WTC11 (cell line): ENCODE measurements at regions of chr3 and their contacts with region 1.

Region 1: GRCh38 chr3:56347219-56347871 is 120.9 kb downstream of the ERC2 start:
- DNase-seq: peak; percentile 92
- ATAC-seq: peak; percentile 96
- H3K4me3 Mint-ChIP-seq: no peak overlapping the region
- H3K27ac Mint-ChIP-seq: no peak overlapping the region
- H3K4me1 Mint-ChIP-seq: peaks cover 15% of the 10 kb centered on the region
- H3K27me3 Mint-ChIP-seq: no peaks in the 10 kb centered on the region
- CTCF ChIP-seq: peak; percentile 90

Region 2: DNA sequence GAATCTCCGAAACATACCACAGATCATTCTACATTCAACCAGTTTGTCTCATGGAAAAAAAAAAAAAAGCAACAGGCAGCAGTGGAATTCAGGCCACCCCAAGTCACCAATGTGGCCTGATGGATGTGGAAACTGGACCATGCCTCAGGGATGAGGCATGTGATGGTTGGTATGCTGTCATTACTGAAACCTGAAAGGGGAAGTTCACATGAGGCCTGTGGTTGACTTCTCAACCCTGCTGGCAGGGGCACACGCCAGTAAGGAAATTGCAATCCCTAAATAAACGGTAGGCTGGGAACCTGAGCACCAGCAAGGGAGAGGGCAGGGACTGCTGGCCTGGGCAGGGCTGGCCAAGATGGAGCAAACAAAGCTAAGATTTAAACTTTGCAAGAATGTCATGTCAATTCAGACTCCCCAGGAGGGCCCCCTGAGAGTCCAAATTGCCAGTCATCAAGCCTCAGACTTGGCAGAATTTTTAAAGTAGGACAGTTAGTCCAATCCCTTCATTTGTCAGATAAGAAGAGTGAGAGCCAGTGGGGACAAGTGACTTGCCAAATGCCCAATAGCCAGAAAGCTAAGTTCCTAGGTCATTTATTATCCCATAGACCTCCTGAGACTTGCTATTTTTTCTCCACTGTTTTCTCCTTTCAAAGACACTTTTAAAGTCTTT is 189.5 kb before region 1 on chr3:
- CTCF ChIA-PET with region 1: no interaction called
- POLR2A ChIA-PET with region 1: no interaction called
- DNase-seq: no peak
- ATAC-seq: 0 out of 2 replicates have a peak, but pooled peaks have one; percentile 30
- H3K4me3 Mint-ChIP-seq: no peak overlapping the region
- H3K27ac Mint-ChIP-seq: no peak overlapping the region; the same call in 1 of the 2 replicates
- H3K4me1 Mint-ChIP-seq: peaks cover 11% of the 10 kb centered on the region
- H3K27me3 Mint-ChIP-seq: no peaks in the 10 kb centered on the region
- CTCF ChIP-seq: no peak

Region 3: DNA sequence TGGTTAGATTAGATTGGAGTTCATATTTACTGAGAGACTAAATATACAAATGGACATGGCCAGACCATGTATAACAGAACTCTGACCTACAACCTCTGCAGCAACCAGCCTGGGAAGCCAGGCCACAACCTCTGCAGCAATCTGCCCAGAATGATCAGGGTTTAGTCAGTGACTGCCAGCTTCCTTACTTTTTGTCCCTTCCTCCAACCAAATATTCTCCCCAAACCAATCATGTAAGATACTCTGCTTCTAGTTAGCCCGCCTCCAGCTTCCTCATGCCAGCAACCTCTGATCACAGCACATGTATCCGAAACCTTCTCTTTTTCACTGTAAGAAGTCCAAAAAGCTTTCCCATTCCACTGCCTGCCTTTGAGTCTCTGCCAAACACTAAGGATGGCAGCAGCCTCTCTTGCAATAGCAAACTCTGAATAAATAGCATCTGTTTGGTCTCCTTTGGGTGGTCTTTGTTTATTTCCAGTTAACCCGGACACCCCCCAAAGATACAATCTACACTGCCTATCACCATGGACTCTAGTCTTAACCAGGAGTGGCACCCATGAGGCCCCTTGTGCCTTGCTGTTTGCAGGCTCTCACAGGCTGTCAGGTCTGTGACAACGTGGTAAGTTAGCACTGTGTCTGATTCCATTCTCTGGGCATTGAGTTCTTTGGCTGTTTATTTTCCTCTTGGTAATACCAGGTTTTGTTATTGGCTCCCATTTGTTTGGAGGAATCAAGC is 18.7 kb after region 1 on chr3:
- CTCF ChIA-PET with region 1: interaction called, 25 read pairs
- POLR2A ChIA-PET with region 1: no interaction called
- DNase-seq: no peak
- ATAC-seq: no peak
- H3K4me3 Mint-ChIP-seq: no peak overlapping the region
- H3K27ac Mint-ChIP-seq: peak overlapping the region; percentile 29
- H3K4me1 Mint-ChIP-seq: peaks cover 20% of the 10 kb centered on the region
- H3K27me3 Mint-ChIP-seq: no peaks in the 10 kb centered on the region
- CTCF ChIP-seq: no peak

Region 4: GRCh38 chr3:56411166-56411565 is 63.8 kb after region 1 on chr3:
- CTCF ChIA-PET with region 1: interaction called, 10 read pairs
- POLR2A ChIA-PET with region 1: no interaction called
- DNase-seq: no peak
- ATAC-seq: no peak
- H3K4me3 Mint-ChIP-seq: no peak overlapping the region
- H3K27ac Mint-ChIP-seq: no peak overlapping the region
- H3K4me1 Mint-ChIP-seq: peaks cover 21% of the 10 kb centered on the region
- H3K27me3 Mint-ChIP-seq: no peaks in the 10 kb centered on the region
- CTCF ChIP-seq: no peak

Region 5: DNA sequence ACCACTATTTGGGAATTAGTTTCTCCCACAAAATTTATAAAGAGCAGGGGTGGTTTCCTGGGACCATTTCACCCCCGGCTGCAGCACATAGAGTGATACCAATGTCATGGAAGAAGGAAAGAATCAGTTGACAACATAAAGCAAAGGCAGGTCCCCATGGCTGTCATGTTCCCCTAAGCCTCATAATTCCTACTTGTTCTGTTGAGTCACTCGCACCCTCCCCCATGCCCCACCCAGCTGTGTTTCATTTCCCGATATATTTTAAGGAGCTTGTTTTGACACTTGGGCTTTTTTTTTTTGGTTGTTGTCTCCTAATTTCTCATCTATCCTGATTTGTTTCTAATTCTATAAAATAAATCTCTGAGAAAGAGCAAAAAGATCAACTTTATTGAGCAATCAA is 96.0 kb after region 1 on chr3:
- CTCF ChIA-PET with region 1: interaction called, 38 read pairs
- POLR2A ChIA-PET with region 1: no interaction called
- DNase-seq: no peak
- ATAC-seq: no peak
- H3K4me3 Mint-ChIP-seq: no peak overlapping the region
- H3K27ac Mint-ChIP-seq: no peak overlapping the region
- H3K4me1 Mint-ChIP-seq: peaks cover 20% of the 10 kb centered on the region
- H3K27me3 Mint-ChIP-seq: no peaks in the 10 kb centered on the region; the same call in 1 of the 2 replicates
- CTCF ChIP-seq: no peak

Region 6: GRCh38 chr3:56494686-56495322 is 147.5 kb after region 1 on chr3:
- CTCF ChIA-PET with region 1: interaction called, 23 read pairs
- POLR2A ChIA-PET with region 1: no interaction called
- DNase-seq: peak; percentile 80
- ATAC-seq: peak; percentile 99
- H3K4me3 Mint-ChIP-seq: no peak overlapping the region
- H3K27ac Mint-ChIP-seq: no peak overlapping the region
- H3K4me1 Mint-ChIP-seq: peaks cover 4% of the 10 kb centered on the region; the same call in 1 of the 2 replicates
- H3K27me3 Mint-ChIP-seq: peaks cover 23% of the 10 kb centered on the region
- CTCF ChIP-seq: peak; percentile 89